PC-9 (cell line): ENCODE measurements at regions of chr7 and their contacts with region 1.

Region 1: GRCh38 chr7:155660059-155660757 is 15.7 kb downstream of the RBM33 start:
- DNase-seq: no peak
- H3K4me3 ChIP-seq: no peak overlapping the region
- H3K27ac ChIP-seq: no peak overlapping the region
- H3K4me1 ChIP-seq: no peaks in the 10 kb centered on the region
- H3K27me3 ChIP-seq: no peaks in the 10 kb centered on the region
- CTCF ChIP-seq: no peak

Region 2: GRCh38 chr7:155333346-155334234 is 326.6 kb before region 1 on chr7:
- CTCF ChIA-PET with region 1: no interaction called
- POLR2A ChIA-PET with region 1: no interaction called
- intact Hi-C with region 1: no loop called
- DNase-seq: no peak
- H3K4me3 ChIP-seq: no peak overlapping the region
- H3K27ac ChIP-seq: no peak overlapping the region
- H3K4me1 ChIP-seq: no peaks in the 10 kb centered on the region
- H3K27me3 ChIP-seq: peaks cover 88% of the 10 kb centered on the region
- CTCF ChIP-seq: no peak

Region 3: GRCh38 chr7:155618708-155619633 is 41.2 kb before region 1 on chr7:
- CTCF ChIA-PET with region 1: no interaction called
- POLR2A ChIA-PET with region 1: no interaction called
- intact Hi-C with region 1: loop called (anchors 1 kb)
- DNase-seq: no peak
- H3K4me3 ChIP-seq: no peak overlapping the region
- H3K27ac ChIP-seq: no peak overlapping the region
- H3K4me1 ChIP-seq: no peaks in the 10 kb centered on the region
- H3K27me3 ChIP-seq: peaks cover 74% of the 10 kb centered on the region
- CTCF ChIP-seq: no peak

Region 4: DNA sequence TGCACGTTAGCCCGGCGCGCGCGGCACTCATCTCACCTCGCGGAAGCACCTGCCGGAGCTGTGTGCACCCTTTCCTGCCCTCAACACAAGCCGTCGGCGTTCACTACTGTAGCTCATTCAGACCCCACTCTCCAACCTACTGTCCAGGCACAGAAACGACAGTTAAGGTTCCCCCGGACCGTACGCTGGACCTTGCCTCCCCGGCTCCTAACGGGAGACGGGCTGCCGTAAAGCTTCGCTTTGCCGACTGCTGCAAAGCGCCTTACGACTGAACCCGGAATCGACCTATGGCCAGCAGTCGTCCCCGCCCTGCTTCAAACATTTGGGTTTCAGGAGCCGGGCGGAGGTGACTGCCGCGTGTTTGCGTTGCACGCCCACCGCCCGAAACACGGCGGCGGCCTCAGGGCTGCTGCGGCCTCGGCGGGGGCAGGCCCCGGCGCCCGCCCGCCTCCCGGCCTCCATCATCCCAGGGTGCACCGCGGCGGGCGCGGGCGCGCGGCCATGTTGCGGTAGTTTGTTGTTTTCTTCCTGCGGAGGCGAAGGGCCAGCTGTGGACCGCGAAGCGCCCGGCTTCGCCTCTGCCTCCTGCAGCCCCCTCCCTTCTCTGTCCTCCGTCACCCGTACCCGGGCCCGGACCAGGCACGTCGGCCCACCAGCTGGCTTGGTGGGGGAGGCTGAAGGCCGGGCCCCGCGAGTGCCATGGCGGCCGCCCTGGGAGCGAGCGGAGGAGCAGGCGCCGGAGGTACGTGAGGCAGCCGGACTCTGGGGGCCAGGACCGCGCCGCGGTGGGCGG is 15.8 kb before region 1 on chr7 and contains the start of gene RBM33:
- CTCF ChIA-PET with region 1: no interaction called
- POLR2A ChIA-PET with region 1: no interaction called
- intact Hi-C with region 1: loop called (anchors 2 kb)
- DNase-seq: peak; percentile 75 to 85
- H3K4me3 ChIP-seq: peak within 1 kb of the TSS; percentile 83
- H3K27ac ChIP-seq: peak within 1 kb of the TSS; percentile 77
- H3K4me1 ChIP-seq: peaks cover 20% of the 10 kb centered on the region
- H3K27me3 ChIP-seq: no peaks in the 10 kb centered on the region
- CTCF ChIP-seq: no peak
- total RNA-seq, gene RBM33: 85.7 and 113 TPM in 2 replicates